ENCODE measurements at regions of chr1 and their contacts with region 1.

Region 1: GRCh38 chr1:22641906-22642636 is 1.4 kb upstream of the C1QC start:
- DNase-seq: peak; percentile 76 to 79
- H3K4me3 ChIP-seq: no peak overlapping the region
- H3K27ac ChIP-seq: no peak overlapping the region
- H3K4me1 ChIP-seq: peaks cover 0 to 4% of the 10 kb centered on the region in 2 donors
- H3K27me3 ChIP-seq: no peaks in the 10 kb centered on the region
- CTCF ChIP-seq: peak; percentile 78 to 97 (median 88)
- POLR2A ChIP-seq: no peak

Region 2: DNA sequence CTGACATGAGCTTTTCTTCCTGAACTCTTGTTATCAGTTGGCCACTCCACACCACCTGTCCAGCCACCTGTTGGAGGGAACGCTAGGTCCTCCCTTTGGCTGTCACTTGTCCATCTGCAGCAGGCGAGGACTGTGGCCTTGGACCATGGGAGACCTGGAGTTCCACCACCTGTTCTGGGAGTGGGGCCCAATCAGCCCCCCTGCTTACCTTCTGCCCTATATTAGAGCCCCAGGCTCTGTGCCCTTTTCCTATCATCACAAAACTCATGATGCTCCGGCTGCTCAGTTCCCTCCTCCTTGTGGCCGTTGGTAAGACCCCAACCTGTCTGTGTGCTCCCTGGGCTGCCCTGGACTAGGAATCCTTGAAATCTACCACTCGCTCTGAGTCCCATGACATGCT is 640.7 kb before region 1 on chr1 and contains the start of gene CELA3A:
- intact Hi-C with region 1: loop called (anchors 10 kb)
- DNase-seq: no peak
- H3K4me3 ChIP-seq: no peak within 1 kb of the TSS
- H3K27ac ChIP-seq: no peak within 1 kb of the TSS
- H3K4me1 ChIP-seq: no peaks in the 10 kb centered on the region
- H3K27me3 ChIP-seq: no peaks in the 10 kb centered on the region
- CTCF ChIP-seq: no peak
- POLR2A ChIP-seq: no peak
- total RNA-seq, gene CELA3A: not detected

Region 3: DNA sequence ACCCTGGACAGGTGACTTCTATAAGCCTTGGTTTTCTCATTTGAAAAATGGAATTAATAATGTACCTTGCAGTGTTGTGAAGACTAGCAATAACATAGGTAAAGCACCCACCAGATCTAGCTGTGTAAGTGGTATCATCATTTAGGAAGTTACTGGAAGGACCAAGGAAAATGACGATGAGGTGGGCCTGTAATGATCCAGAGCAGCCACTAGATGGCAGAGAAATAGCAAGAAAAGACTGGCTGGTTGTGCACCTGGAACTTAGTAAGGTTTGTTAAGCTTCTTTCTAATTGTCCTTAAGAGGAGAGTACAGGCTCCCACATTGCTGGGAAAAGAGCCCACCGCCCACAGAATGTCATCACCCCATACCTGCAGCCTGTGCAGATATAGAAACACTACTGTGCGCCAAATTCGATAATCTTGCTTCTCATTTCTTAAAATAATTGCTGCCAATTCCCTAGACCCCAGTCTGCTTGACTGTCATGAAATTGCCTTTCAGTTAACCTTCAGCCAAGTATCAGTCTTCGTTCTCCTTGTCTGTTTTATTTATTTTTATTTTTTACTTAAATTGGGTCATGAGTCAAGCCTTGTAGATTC is 536.4 kb before region 1 on chr1:
- intact Hi-C with region 1: loop called (anchors 10 kb)
- DNase-seq: peak; percentile 29 to 45
- H3K4me3 ChIP-seq: no peak overlapping the region
- H3K27ac ChIP-seq: no peak overlapping the region
- H3K4me1 ChIP-seq: peaks cover 0 to 2% of the 10 kb centered on the region in 2 donors
- H3K27me3 ChIP-seq: no peaks in the 10 kb centered on the region
- CTCF ChIP-seq: peak; percentile 73 to 85 (median 80)
- POLR2A ChIP-seq: no peak

Region 4: GRCh38 chr1:22131875-22132486 is 510.1 kb before region 1 on chr1:
- intact Hi-C with region 1: loop called (anchors 10 kb)
- DNase-seq: peak; percentile 65 to 66
- H3K4me3 ChIP-seq: no peak overlapping the region
- H3K27ac ChIP-seq: no peak overlapping the region
- H3K4me1 ChIP-seq: peaks cover 23 to 33% of the 10 kb centered on the region in 2 donors
- H3K27me3 ChIP-seq: no peaks in the 10 kb centered on the region
- CTCF ChIP-seq: peak; percentile 59 to 88 (median 80)
- POLR2A ChIP-seq: no peak

Region 5: GRCh38 chr1:22416555-22417454 is 225.3 kb before region 1 on chr1:
- intact Hi-C with region 1: loop called (anchors 1 kb)
- DNase-seq: peak; percentile 75 to 80
- H3K4me3 ChIP-seq: no peak overlapping the region
- H3K27ac ChIP-seq: peak overlapping the region in 1 of 3 donors; percentile 98
- H3K4me1 ChIP-seq: peaks cover 19 to 27% of the 10 kb centered on the region in 2 donors
- H3K27me3 ChIP-seq: no peaks in the 10 kb centered on the region
- CTCF ChIP-seq: peak; percentile 59 to 97 (median 94)
- POLR2A ChIP-seq: no peak

Region 6: GRCh38 chr1:22689505-22689904 is 47.4 kb after region 1 on chr1:
- intact Hi-C with region 1: no loop called
- DNase-seq: peak; percentile 12 to 41
- H3K4me3 ChIP-seq: no peak overlapping the region
- H3K27ac ChIP-seq: no peak overlapping the region
- H3K4me1 ChIP-seq: no peaks in the 10 kb centered on the region
- H3K27me3 ChIP-seq: no peaks in the 10 kb centered on the region
- CTCF ChIP-seq: no peak
- POLR2A ChIP-seq: no peak